Head of caudate nucleus (tissue), 42 donors: ENCODE measurements at regions of chr17 and their contacts with region 1.

Region 1: GRCh38 chr17:73192894-73193701 is at the start of gene COG1:
- DNase-seq: peak; percentile 55 to 94 (median 83)

Region 2: GRCh38 chr17:73156166-73156840 is 36.8 kb before region 1 on chr17:
- intact Hi-C with region 1: no loop called
- DNase-seq: peak; percentile 75 to 93 (median 82)

Region 3: DNA sequence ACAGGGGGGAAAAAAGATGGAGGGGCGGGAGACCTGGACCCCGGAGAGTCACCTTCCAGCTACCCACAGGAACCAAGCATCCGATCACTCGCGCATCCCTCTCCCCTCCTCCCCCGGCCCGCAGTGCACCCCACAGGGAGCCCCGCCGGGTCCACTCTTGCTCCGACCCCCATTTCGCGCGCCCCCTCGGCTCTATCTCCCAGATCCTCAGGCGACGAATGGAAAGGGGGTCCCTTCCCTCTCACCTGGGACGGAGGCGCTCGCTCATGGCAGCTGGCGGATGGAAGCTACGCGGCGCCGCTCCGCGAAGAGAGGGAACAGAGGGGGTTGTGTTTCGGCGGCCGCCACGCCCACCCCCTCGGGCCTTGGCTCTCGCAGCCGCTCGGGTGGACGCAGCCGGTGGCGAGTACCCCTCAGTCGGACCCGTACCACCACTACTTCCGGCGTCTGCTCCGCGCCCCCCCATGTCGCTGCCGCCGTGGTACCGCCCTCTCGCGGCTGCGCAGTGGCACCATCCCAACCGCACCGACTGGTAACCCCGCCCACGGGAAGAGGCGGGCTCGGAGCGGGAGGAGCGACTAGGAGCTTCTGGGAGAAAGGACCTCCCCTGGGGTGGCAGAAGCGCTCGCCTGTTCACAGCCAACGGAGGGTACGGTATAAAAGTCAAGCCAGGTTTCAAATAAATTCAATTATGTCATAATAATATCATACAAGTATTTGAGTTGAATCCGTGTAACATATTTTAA is 38.9 kb after region 1 on chr17:
- intact Hi-C with region 1: loop called (anchors 2 kb)
- DNase-seq: peak; percentile 91 to 99 (median 98)

Region 4: GRCh38 chr17:73359987-73360410 is 166.9 kb after region 1 on chr17:
- intact Hi-C with region 1: loop called (anchors 10 kb)
- DNase-seq: peak in 5 of 42 donors; percentile 40 to 55 (median 44)